ENCODE measurements at regions of chr10 and their contacts with region 1.

Region 1: DNA sequence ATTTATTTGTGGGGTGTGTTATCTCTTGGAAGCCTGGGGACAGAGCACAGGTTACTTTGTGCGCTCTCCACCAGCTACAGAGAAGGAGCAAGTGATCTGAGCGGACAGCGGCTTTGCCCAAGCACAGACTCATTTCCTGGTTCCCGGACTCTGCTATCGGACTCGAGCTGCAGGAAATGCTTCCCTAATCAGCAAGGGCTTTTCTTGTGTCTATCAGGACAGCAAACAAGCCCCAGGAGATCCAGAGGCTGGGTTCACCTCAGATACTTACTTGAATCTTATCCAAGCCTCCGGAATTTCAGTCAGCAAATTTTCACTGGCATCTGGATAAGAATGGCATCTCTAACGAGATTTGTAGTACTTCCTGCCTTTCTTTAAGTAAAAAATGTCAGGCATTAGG is 27.8 kb downstream of the MRC1 start:
- DNase-seq: no peak
- H3K4me3 ChIP-seq: no peak overlapping the region
- H3K27ac ChIP-seq: no peak overlapping the region
- H3K4me1 ChIP-seq: no peaks in the 10 kb centered on the region
- H3K27me3 ChIP-seq: no peaks in the 10 kb centered on the region
- CTCF ChIP-seq: no peak
- POLR2A ChIP-seq: no peak

Region 2: GRCh38 chr10:17703706-17704105 is 133.2 kb before region 1 on chr10:
- intact Hi-C with region 1: no loop called
- DNase-seq: no peak
- H3K4me3 ChIP-seq: no peak overlapping the region
- H3K27ac ChIP-seq: no peak overlapping the region
- H3K4me1 ChIP-seq: no peaks in the 10 kb centered on the region
- H3K27me3 ChIP-seq: no peaks in the 10 kb centered on the region
- CTCF ChIP-seq: no peak
- POLR2A ChIP-seq: no peak

Region 3: DNA sequence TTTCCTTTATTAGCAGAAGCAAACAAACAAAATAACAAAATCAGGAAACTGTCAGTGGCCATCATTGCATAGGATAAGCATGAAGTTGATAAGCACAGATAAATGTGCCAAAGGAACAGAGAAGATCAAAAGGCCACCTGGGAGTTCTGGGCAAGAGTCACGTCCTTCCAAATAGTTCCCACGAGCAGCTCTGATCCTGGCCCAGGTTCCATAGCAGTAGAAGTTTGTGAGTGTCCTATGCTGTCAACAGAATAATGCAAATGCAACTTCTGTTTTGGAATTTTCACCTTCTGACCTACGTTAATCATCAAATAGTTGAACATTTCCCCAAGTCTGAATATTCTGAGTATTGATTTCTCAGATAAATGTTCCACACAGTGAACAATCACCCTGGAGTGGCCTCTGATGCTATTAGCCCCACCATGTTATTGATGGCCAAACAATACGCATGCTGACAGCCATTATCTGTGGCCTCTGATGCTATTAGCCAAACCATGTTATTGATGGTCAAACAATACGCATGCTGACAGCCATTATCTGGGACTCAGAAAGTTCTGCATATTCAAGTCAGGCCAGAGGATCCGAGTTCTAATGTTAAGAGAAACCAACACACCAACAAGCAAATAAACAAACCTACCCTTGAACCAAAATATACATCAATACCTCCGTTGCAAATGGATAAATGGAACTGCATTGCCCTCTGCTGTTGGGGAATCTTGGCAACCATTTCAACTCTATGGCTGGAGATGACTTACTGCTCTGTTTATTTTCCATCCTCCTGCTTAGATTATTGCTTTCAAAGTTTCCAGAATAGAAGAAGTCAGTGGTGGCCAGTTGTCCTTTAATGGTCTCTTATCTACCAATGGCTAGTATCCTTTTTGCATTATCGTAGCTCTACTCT is 35.5 kb after region 1 on chr10:
- intact Hi-C with region 1: loop called (anchors 1 kb)
- DNase-seq: no peak
- H3K4me3 ChIP-seq: no peak overlapping the region
- H3K27ac ChIP-seq: no peak overlapping the region
- H3K4me1 ChIP-seq: no peaks in the 10 kb centered on the region
- H3K27me3 ChIP-seq: no peaks in the 10 kb centered on the region
- CTCF ChIP-seq: no peak
- POLR2A ChIP-seq: no peak